ENCODE measurements at regions of chr3 and their contacts with region 1.

Region 1: GRCh38 chr3:134308350-134308891 is 57.8 kb upstream of the RYK start:
- DNase-seq: peak; percentile 87
- H3K4me3 ChIP-seq: peak overlapping the region in 1 of 8 donors; percentile 48
- H3K27ac ChIP-seq: peak overlapping the region in 3 of 8 donors; percentile 28 to 85 (median 51)
- H3K4me1 ChIP-seq: peaks cover 6 to 46% (median 28%) of the 10 kb centered on the region in 6 donors
- H3K27me3 ChIP-seq: peaks cover 0 to 57% (median 10%) of the 10 kb centered on the region in 7 donors
- CTCF ChIP-seq: peak; percentile 83 to 96 (median 92)
- POLR2A ChIP-seq: no peak

Region 2: DNA sequence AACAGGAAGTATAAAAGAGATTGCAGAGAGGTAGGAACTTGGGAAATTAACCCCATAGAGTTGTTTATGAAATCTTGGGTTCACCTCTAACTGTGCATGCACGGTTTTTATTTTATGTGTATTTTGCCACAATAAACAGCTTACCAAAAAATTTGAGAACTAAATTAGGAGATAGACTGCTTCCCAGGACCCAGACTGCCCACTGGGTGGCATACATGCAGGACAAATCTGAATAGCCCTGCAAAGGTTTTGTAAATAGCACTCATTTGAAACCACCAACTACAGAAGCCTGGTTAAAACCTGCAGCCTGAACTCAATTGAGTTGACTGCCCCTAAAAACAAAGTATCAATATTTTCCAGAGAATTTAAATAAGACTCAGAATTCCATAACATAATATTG is 182.3 kb before region 1 on chr3:
- intact Hi-C with region 1: no loop called
- DNase-seq: no peak
- H3K4me3 ChIP-seq: no peak overlapping the region
- H3K27ac ChIP-seq: no peak overlapping the region
- H3K4me1 ChIP-seq: peaks cover 0 to 8% (median 2%) of the 10 kb centered on the region in 6 donors
- H3K27me3 ChIP-seq: no peaks in the 10 kb centered on the region
- CTCF ChIP-seq: no peak
- POLR2A ChIP-seq: no peak

Region 3: GRCh38 chr3:134212906-134213665 is 95.3 kb before region 1 on chr3:
- intact Hi-C with region 1: loop called (anchors 10 kb)
- DNase-seq: peak; percentile 92
- H3K4me3 ChIP-seq: no peak overlapping the region
- H3K27ac ChIP-seq: no peak overlapping the region
- H3K4me1 ChIP-seq: peaks cover 0 to 60% (median 15%) of the 10 kb centered on the region in 6 donors
- H3K27me3 ChIP-seq: no peaks in the 10 kb centered on the region
- CTCF ChIP-seq: peak; percentile 76 to 93 (median 87)
- POLR2A ChIP-seq: no peak

Region 4: GRCh38 chr3:134236505-134237170 is 71.8 kb before region 1 on chr3:
- intact Hi-C with region 1: no loop called
- DNase-seq: no peak
- H3K4me3 ChIP-seq: no peak overlapping the region
- H3K27ac ChIP-seq: peak overlapping the region in 5 of 8 donors; percentile 4 to 69 (median 62)
- H3K4me1 ChIP-seq: peaks cover 20 to 94% (median 67%) of the 10 kb centered on the region in 6 donors
- H3K27me3 ChIP-seq: no peaks in the 10 kb centered on the region
- CTCF ChIP-seq: no peak
- POLR2A ChIP-seq: no peak

Region 5: DNA sequence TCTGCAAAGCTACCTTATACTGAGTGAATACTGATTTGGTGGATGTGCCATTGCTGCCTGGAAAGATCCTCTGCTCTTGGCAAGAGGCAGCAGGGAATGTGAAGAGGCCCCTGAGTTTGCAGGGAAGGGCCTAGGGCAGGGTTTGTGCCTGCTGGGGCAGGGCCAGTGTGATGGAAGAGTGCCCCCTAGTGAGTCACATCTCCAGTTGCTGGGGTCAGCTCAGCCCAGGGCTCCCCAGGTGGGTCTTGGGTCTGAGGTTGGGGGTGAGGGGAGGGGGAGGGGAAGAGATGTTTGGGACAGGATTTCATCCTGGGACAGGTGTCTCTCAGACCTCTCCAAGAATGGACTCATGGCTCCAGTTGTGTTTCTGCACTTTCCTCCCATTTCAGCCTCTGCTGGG is 70.0 kb after region 1 on chr3:
- intact Hi-C with region 1: loop called (anchors 5 kb)
- DNase-seq: peak; percentile 66
- H3K4me3 ChIP-seq: no peak overlapping the region
- H3K27ac ChIP-seq: no peak overlapping the region
- H3K4me1 ChIP-seq: peaks cover 0 to 40% (median 25%) of the 10 kb centered on the region in 6 donors
- H3K27me3 ChIP-seq: peaks cover 0 to 37% (median 11%) of the 10 kb centered on the region in 7 donors
- CTCF ChIP-seq: peak in 7 of 11 experiments; percentile 16 to 60 (median 48)
- POLR2A ChIP-seq: no peak

Measured in spleen (tissue), 13 donors.